AG04449 (cell line): ENCODE measurements at regions of chr6 and their contacts with region 1.

Region 1: DNA sequence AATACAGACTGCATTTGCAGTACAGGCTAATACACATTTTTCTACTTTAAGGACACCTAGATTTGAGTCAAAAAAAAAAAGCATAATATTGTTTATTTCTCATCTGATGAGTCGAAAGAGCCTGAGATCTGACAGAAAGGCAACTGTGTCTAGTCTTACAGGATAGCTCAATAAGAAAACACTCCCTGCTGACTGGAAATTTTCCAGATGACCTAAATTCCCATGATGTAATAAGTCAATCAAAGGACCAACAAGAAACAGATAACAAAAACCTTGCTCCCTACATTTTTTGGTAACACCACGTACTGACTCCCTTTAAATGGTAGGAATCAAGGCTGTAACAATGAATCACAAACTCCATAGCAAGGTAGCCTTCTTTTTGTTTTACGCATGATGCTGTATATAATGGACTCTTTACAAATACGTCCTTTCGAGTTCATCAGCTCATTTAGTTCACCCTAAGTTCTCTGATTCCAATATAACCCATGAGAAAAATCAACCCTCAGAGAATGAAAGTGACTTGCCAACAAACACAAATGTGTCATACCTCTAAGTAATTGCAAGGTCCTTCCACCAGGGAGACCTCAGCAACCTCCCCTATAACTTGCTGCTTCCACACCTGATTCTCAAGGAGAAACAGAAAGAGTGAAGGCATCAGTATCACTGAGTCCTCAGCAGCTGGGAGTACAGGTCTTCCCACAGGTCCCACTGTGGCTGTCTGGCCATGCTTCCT is 12.1 kb downstream of the TBX18 start:
- DNase-seq: no peak
- H3K4me3 ChIP-seq: no peak overlapping the region
- CTCF ChIP-seq: no peak

Region 2: GRCh38 chr6:84764332-84765049 is 12.2 kb after region 1 on chr6 and contains the start of gene TBX18:
- CTCF ChIA-PET with region 1: interaction called, 13 read pairs
- POLR2A ChIA-PET with region 1: interaction called, 3 read pairs
- DNase-seq: peak; percentile 95
- H3K4me3 ChIP-seq: peak within 1 kb of the TSS; percentile 79
- CTCF ChIP-seq: peak; percentile 31